CD8-positive, alpha-beta memory T cell (primary cell): ENCODE measurements at regions of chr19 and their contacts with region 1.

Region 1: GRCh38 chr19:58362272-58362994 is at the start of gene ZNF497:
- DNase-seq: peak; percentile 94 to 98 (median 96)
- H3K4me3 ChIP-seq: peak within 1 kb of the TSS; percentile 97
- H3K4me3 Mint-ChIP-seq: peak within 1 kb of the TSS; percentile 85 to 100 (median 93)
- H3K27ac ChIP-seq: peak within 1 kb of the TSS; percentile 77
- H3K27ac Mint-ChIP-seq: peak within 1 kb of the TSS; percentile 85 to 98 (median 94)
- H3K4me1 ChIP-seq: peaks cover 8% of the 10 kb centered on the region
- H3K4me1 Mint-ChIP-seq: peaks cover 6 to 20% (median 11%) of the 10 kb centered on the region in 3 donors
- H3K27me3 ChIP-seq: no peaks in the 10 kb centered on the region
- H3K27me3 Mint-ChIP-seq: no peaks in the 10 kb centered on the region
- total RNA-seq, gene ZNF497: 1.7 TPM

Region 2: DNA sequence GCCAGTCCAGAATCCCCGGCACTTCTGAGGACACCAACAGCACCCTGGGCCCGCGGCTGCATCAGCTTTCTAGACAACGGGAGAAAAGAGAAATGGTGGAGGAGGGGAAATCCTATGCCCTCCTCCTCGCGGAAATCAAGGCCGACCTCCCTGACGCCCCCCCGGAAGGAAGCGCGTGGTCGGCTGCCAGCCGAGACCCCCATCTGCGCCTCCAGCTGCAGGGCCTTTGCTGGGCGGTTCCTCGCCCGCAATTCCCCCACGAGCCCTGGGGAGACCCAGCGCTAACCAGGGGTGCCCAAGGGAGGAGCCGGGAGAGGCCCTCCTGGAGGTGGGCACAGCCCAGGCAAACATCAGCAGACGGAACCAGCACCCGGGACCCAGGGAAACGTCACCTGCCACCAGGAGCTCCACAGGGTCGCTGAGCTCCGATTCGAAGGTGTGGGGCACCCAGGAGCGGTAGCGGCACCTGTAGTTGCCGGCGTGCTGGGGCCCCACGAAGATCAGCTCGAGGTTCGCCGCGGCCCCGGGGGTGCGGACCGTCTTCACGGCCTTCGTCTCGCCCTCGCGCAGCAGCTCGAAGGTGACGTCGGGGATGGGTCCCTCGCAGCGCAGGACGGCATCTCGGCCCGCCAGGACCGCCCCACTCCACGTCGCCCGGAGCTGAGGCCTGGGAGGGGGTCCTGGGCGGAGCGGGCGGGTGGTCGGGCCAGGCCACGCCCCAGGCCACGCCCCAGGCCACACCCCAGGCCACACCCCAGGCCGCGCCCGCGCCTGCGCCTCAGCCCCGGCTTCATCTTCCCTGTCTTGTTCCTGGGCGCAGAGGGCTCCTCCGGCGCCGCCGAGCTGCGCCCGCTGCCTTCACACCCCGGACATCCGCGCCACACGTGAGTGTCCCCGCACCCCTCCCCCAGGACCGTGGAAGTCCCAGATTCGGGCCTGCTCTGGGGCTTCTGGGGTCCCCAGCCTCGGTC is 15.2 kb before region 1 on chr19:
- CTCF ChIA-PET with region 1: interaction called, 13 read pairs
- POLR2A ChIA-PET with region 1: interaction called, 16 read pairs
- DNase-seq: peak; percentile 44 to 85 (median 71)
- H3K4me3 ChIP-seq: peak overlapping the region; percentile 72
- H3K4me3 Mint-ChIP-seq: peak overlapping the region; percentile 91 to 97 (median 93)
- H3K27ac ChIP-seq: peak overlapping the region; percentile 67
- H3K27ac Mint-ChIP-seq: peak overlapping the region; percentile 86 to 96 (median 90)
- H3K4me1 ChIP-seq: peaks cover 19% of the 10 kb centered on the region
- H3K4me1 Mint-ChIP-seq: peaks cover 26 to 36% (median 32%) of the 10 kb centered on the region in 3 donors
- H3K27me3 ChIP-seq: no peaks in the 10 kb centered on the region
- H3K27me3 Mint-ChIP-seq: no peaks in the 10 kb centered on the region

Region 3: DNA sequence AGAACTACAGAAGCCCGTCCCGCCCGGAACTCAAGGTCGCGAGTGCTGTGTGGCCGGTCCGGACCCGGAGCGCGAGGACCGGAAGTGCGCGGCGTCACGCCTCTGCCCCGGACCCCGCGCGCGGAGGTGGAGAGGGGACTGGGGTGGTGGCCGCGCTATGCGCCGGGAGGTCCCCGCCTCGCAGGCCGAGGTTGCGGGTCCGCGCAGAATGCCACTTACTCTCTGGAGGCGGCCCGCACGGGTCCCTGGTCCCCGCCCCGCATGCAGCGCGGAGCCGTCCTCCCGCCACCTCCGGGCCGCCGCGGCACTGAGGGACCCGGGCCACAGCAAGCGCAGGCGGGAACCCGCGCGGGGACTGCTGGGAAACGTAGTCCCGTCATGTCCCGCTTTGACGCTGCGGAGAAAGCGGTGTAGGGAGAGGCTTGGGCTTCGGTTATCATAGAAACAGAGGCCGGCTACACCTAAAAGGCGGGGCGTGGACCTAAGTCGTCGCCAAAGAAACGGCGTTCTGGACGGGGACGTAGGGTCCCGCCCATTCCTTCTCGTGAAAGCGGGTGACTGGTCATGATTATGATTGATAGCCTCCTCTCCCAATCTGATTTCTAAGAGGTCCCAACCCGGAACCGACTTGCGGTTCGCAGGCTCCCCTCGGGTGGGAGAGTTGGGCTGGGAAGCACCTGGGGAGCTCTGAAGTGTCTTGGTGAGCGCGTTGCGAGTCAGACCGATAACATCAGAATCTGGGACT is 18.5 kb after region 1 on chr19 and contains the start of gene ZNF837:
- CTCF ChIA-PET with region 1: interaction called, 5 read pairs
- POLR2A ChIA-PET with region 1: interaction called, 11 read pairs
- DNase-seq: peak; percentile 96 to 100 (median 99)
- H3K4me3 ChIP-seq: peak within 1 kb of the TSS; percentile 70
- H3K4me3 Mint-ChIP-seq: peak within 1 kb of the TSS; percentile 87 to 98 (median 93)
- H3K27ac ChIP-seq: peak within 1 kb of the TSS; percentile 83
- H3K27ac Mint-ChIP-seq: peak within 1 kb of the TSS; percentile 93 to 100 (median 97)
- H3K4me1 ChIP-seq: peaks cover 25% of the 10 kb centered on the region
- H3K4me1 Mint-ChIP-seq: peaks cover 17 to 40% (median 27%) of the 10 kb centered on the region in 3 donors
- H3K27me3 ChIP-seq: no peaks in the 10 kb centered on the region
- H3K27me3 Mint-ChIP-seq: peaks cover 0 to 1% of the 10 kb centered on the region in 2 donors
- total RNA-seq, gene ZNF837: 1.8 to 2.3 TPM